PC-9 (cell line): ENCODE measurements at regions of chr5 and their contacts with region 1.

Region 1: GRCh38 chr5:28473531-28474107 is 1435.2 kb upstream of the CDH9 start:
- DNase-seq: no peak
- H3K4me3 ChIP-seq: no peak overlapping the region
- H3K27ac ChIP-seq: no peak overlapping the region
- H3K4me1 ChIP-seq: no peaks in the 10 kb centered on the region
- H3K27me3 ChIP-seq: no peaks in the 10 kb centered on the region
- CTCF ChIP-seq: peak; percentile 66

Region 2: DNA sequence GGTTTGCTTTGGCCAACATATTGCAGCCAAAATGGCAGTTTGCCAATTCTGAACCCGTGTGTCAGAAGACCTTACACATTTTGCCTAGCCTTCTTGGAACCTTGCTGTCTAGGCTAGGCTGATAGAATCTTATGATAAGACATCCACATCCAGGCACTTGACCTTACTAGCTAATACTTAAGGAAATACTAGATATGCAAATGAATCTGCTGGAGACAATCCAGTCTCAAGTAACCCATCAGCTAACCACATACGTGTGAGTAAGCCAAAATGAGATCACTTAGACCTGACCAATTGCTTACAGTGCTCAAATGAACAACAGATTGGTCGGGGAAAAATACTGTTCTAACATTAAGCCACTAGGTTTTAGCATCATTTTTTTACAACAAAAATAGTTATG is 69.4 kb after region 1 on chr5:
- CTCF ChIA-PET with region 1: no interaction called
- POLR2A ChIA-PET with region 1: no interaction called
- intact Hi-C with region 1: no loop called
- DNase-seq: peak; percentile 43 to 48
- H3K4me3 ChIP-seq: no peak overlapping the region
- H3K27ac ChIP-seq: no peak overlapping the region
- H3K4me1 ChIP-seq: no peaks in the 10 kb centered on the region
- H3K27me3 ChIP-seq: no peaks in the 10 kb centered on the region
- CTCF ChIP-seq: no peak

Region 3: DNA sequence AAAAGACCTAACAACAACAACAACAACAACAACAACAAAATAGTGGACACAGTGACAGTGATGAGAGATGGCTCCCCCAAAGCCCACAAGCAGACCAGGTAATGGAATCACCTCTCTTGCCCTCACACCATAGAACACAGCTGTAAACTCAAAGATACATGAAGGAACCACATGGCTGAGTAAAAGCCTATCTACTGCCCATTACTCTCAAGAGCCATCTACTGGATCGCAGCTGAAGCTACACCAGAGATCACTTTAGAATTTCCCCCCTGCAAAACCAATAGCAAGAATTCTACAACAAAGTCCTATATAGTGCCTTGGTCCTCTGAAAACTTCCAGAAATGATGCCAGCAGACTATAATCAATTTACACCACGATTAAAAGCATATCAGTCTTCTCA is 102.4 kb after region 1 on chr5:
- CTCF ChIA-PET with region 1: interaction called, 3 read pairs
- POLR2A ChIA-PET with region 1: no interaction called
- intact Hi-C with region 1: loop called (anchors 2 kb)
- DNase-seq: no peak
- H3K4me3 ChIP-seq: no peak overlapping the region
- H3K27ac ChIP-seq: no peak overlapping the region
- H3K4me1 ChIP-seq: no peaks in the 10 kb centered on the region
- H3K27me3 ChIP-seq: no peaks in the 10 kb centered on the region
- CTCF ChIP-seq: peak; percentile 36; the same call in 1 of the 2 replicates